PC-3 (cell line): ENCODE measurements at regions of chr17 and their contacts with region 1.

Region 1: DNA sequence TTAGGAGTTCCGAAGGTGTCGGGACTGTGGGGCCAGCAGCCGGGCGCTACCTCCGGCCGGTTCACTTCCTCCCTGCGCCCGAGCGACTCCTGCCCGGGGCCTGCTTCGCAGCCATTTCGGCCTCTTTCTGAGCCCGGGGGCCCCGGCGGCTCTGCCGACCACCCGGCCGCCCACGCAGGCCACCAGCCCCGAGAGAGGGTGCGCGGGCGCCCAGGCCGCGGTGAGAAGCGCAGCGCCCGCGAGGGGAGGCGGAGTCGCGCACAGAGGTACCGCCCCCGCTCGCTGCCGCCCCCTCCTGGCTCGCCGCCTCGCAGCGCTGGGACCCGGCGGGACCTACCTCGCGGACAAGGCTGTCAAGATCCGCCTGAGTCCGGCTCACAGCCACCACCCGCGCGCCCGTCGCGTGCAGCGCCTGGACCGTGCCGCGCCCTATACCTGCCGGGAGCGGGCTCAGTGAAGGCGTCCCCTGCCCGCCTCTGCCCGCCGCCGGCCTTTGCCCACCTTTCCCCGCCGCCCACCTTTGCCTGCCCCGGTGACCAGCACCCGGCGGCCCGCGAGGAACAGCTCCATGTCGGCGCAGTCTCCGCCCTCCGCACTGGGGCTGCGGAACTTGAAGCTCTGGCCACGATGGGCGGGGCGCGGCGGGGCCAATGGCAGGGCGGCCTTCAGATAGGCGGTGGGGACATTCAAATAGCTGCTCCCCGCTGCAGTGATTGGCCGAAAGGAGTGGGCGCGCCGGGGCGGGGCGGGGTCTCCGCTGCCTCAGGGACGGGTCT is at the start of gene DCXR:
- DNase-seq: peak; percentile 95
- ATAC-seq: peak; percentile 92
- H3K4me3 ChIP-seq: peak within 1 kb of the TSS; percentile 86
- H3K27ac ChIP-seq: peak within 1 kb of the TSS; percentile 46
- H3K4me1 ChIP-seq: peaks cover 22% of the 10 kb centered on the region
- H3K27me3 ChIP-seq: no peaks in the 10 kb centered on the region
- CTCF ChIP-seq: peak; percentile 73
- total RNA-seq, gene DCXR: 135 and 142 TPM in 2 replicates

Region 2: DNA sequence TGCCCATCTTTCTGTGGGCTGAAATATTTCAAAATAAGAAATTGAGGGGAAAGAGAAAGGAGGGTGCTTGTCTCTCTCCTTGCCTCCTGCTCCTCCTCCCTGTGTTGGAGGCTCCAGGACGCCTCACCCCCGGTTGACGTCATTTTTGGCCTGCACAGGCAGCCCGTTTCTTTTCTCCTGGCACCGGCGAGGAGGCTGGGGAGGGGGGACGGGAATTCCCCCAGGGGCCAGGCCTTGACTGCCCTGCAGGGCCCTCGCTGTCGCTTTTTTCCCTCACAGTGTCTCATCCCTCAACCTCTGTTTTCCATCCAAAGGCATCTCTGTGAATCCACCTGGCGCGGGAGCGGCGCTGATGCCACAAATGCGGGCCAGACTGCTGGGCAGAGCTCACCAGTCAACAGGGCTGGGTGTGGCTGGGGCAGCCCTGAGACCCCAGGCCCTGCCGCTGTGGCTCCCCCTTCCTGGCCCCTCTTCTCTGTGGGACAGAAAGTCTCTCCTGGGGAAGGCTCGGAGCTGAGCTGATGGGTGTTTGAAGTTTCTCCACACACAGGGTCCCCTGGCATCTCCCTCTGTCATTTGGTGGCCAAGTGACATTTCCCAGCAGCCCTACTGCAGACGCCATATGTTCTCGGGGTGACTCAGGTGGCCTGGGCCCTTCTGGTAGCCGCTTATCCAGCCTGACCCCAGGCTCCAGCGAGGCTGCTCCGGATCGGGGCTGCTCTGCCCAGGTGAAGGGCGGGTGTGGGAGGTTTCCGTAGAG is 30.7 kb before region 1 on chr17:
- CTCF ChIA-PET with region 1: no interaction called
- POLR2A ChIA-PET with region 1: no interaction called
- intact Hi-C with region 1: no loop called
- DNase-seq: no peak
- ATAC-seq: no peak
- H3K4me3 ChIP-seq: no peak overlapping the region
- H3K27ac ChIP-seq: no peak overlapping the region
- H3K4me1 ChIP-seq: peaks cover 21% of the 10 kb centered on the region
- H3K27me3 ChIP-seq: no peaks in the 10 kb centered on the region
- CTCF ChIP-seq: no peak

Region 3: DNA sequence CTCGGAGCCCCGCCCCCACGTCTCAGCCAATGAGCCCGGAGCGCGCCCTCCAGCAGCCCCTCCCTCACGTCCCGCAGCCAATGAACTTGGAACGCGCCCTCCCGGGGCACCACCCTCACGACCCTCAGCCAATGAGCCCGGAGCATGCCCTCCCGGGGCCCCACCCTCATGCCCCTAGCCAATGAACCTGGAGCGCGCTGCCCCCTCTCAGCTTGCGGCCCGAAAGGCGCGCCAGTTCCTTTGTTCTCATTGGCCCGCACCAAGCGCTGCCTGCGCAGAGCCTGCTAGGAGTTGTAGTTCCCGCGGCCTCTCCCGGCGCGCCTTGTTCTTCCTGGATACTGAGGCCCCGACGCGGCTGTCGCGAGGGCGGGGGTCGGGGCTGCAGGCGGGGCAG is 14.3 kb before region 1 on chr17 and contains the start of gene LRRC45:
- CTCF ChIA-PET with region 1: interaction called, 10 read pairs
- POLR2A ChIA-PET with region 1: no interaction called
- intact Hi-C with region 1: no loop called
- DNase-seq: peak; percentile 99
- ATAC-seq: peak; percentile 84
- H3K4me3 ChIP-seq: peak within 1 kb of the TSS; percentile 100
- H3K27ac ChIP-seq: peak within 1 kb of the TSS; percentile 57
- H3K4me1 ChIP-seq: peaks cover 21% of the 10 kb centered on the region; the same call in 1 of the 2 replicates
- H3K27me3 ChIP-seq: no peaks in the 10 kb centered on the region
- CTCF ChIP-seq: no peak
- total RNA-seq, gene LRRC45: 71.5 and 90.0 TPM in 2 replicates

Region 4: DNA sequence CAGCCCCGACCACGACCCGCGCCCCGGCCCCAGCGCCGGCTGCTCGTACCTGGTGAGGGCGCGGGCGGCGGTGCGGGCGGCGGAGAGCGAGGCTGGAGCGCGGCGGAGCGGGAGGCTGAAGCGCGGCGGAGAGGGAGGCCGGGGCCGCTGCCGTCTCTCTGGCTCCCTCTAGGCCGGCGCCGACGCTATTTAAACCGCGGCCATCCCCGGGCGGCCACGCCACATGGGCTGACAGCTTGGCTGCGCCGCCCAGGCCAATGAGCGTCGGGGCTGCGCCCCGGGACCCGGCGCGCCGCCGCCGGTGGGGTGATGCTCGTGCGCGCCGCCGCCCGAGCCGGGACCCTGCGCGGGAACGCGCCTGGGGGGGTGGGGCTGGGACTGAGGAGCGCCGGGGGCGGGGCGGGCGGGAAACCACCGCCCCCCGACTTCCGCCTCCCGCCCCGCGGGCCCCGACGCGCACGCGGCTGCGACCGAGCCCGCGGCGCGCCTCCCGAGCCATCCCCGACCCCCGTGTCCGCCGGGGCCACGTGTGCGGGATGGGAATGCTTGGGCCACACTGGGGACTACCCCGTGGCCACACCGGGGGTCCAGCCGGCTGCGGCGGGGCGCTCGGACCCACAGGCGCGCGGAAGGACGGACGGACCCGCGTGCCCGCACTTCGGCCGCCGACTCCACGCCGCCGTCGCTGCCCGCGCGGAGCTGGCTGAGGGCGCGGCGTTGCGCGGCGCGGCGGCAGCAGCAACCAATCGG is 60.9 kb after region 1 on chr17 and contains the start of gene FASN:
- CTCF ChIA-PET with region 1: no interaction called
- POLR2A ChIA-PET with region 1: interaction called, 4 read pairs
- intact Hi-C with region 1: loop called (anchors 5 kb)
- DNase-seq: peak; percentile 97
- ATAC-seq: peak; percentile 76
- H3K4me3 ChIP-seq: peak within 1 kb of the TSS; percentile 91
- H3K27ac ChIP-seq: peak within 1 kb of the TSS; percentile 85
- H3K4me1 ChIP-seq: peaks cover 30% of the 10 kb centered on the region
- H3K27me3 ChIP-seq: no peaks in the 10 kb centered on the region
- CTCF ChIP-seq: peak; percentile 33; the same call in 1 of the 2 replicates
- total RNA-seq, gene FASN: 269 and 364 TPM in 2 replicates